K562 (cell line): ENCODE measurements at regions of chr11 and their contacts with region 1.

Region 1: GRCh38 chr11:113587308-113587739 is 112.1 kb upstream of the DRD2 start:
- DNase-seq: peak in 2 of 4 experiments; percentile 30 to 54
- ATAC-seq: peak; percentile 82
- H3K4me3 ChIP-seq: no peak overlapping the region
- H3K27ac ChIP-seq: no peak overlapping the region
- H3K4me1 ChIP-seq: peaks cover 2 to 8% of the 10 kb centered on the region in 2 experiments; a peak in 4 of 5 replicates
- H3K27me3 ChIP-seq: no peaks in the 10 kb centered on the region
- CTCF ChIP-seq: peak; percentile 43 to 47 (median 44); a peak in 4 of 6 replicates
- EP300 ChIP-seq: 0 out of 2 replicates have a peak, but pooled peaks have one; percentile 16
- POLR2A ChIP-seq: no peak
- RAD21 ChIP-seq: peak; percentile 58 to 80

Region 2: GRCh38 chr11:113697756-113698407 is 110.6 kb after region 1 on chr11:
- CTCF ChIA-PET with region 1: no interaction called
- POLR2A ChIA-PET with region 1: no interaction called
- in situ Hi-C with region 1: no loop called
- intact Hi-C with region 1: no loop called
- DNase-seq: peak in 1 of 4 experiments; percentile 40
- ATAC-seq: peak; percentile 58
- H3K4me3 ChIP-seq: no peak overlapping the region
- H3K27ac ChIP-seq: no peak overlapping the region
- H3K4me1 ChIP-seq: peaks cover 11 to 15% of the 10 kb centered on the region in 2 experiments; a peak in 4 of 5 replicates
- H3K27me3 ChIP-seq: no peaks in the 10 kb centered on the region
- CTCF ChIP-seq: no peak
- EP300 ChIP-seq: no peak
- POLR2A ChIP-seq: no peak
- RAD21 ChIP-seq: no peak; a peak in 1 of 4 replicates

Region 3: DNA sequence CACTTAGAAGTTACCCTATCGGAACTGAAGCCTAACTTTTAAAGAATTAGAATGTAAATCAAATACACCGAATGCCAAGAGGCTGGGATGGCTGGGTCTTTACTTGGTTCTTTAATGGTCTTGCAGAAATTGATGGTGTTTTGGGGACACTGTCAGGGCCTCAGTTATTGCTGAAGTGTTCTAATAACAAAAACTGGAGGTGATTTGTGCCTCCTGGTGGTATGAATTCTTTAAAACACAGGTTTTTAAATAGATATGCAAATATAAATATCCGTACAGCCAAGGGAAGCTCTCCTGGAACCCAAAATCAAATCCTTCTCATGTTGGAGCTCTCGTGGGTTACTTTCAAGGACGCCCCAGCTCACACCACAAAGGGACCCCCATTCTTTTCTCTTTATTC is 138.1 kb after region 1 on chr11:
- CTCF ChIA-PET with region 1: interaction called, 15 read pairs
- POLR2A ChIA-PET with region 1: no interaction called
- in situ Hi-C with region 1: no loop called
- intact Hi-C with region 1: loop called (anchors 1 kb)
- DNase-seq: peak in 1 of 4 experiments; percentile 24
- ATAC-seq: peak; percentile 65
- H3K4me3 ChIP-seq: no peak overlapping the region
- H3K27ac ChIP-seq: no peak overlapping the region
- H3K4me1 ChIP-seq: peaks cover 7 to 19% of the 10 kb centered on the region in 2 experiments; a peak in 4 of 5 replicates
- H3K27me3 ChIP-seq: no peaks in the 10 kb centered on the region
- CTCF ChIP-seq: peak; percentile 29 to 54 (median 31); a peak in 3 of 6 replicates
- EP300 ChIP-seq: no peak
- POLR2A ChIP-seq: no peak
- RAD21 ChIP-seq: peak; percentile 33 to 59; a peak in 3 of 4 replicates